CD8-positive, alpha-beta T cell (primary cell): ENCODE measurements at regions of chr14 and their contacts with region 1.

Region 1: GRCh38 chr14:24241829-24242443 is 487 bp downstream of the TINF2 start:
- DNase-seq: peak; percentile 84 to 97 (median 94)
- ATAC-seq: peak; percentile 83
- H3K4me3 ChIP-seq: peak overlapping the region; percentile 75 to 83
- H3K4me3 Mint-ChIP-seq: peak overlapping the region; percentile 99
- H3K27ac ChIP-seq: peak overlapping the region; percentile 98
- H3K27ac Mint-ChIP-seq: peak overlapping the region; percentile 100
- H3K4me1 ChIP-seq: peaks cover 41% of the 10 kb centered on the region
- H3K4me1 Mint-ChIP-seq: peaks cover 58% of the 10 kb centered on the region
- H3K27me3 ChIP-seq: no peaks in the 10 kb centered on the region
- H3K27me3 Mint-ChIP-seq: no peaks in the 10 kb centered on the region
- CTCF ChIP-seq: peak; percentile 48

Region 2: GRCh38 chr14:22689186-22689585 is 1552.8 kb before region 1 on chr14:
- CTCF ChIA-PET with region 1: no interaction called
- POLR2A ChIA-PET with region 1: no interaction called
- intact Hi-C with region 1: no loop called
- DNase-seq: no peak
- ATAC-seq: peak; percentile 54
- H3K4me3 ChIP-seq: no peak overlapping the region
- H3K4me3 Mint-ChIP-seq: no peak overlapping the region
- H3K27ac ChIP-seq: no peak overlapping the region
- H3K27ac Mint-ChIP-seq: no peak overlapping the region
- H3K4me1 ChIP-seq: no peaks in the 10 kb centered on the region
- H3K4me1 Mint-ChIP-seq: no peaks in the 10 kb centered on the region
- H3K27me3 ChIP-seq: peaks cover 2 to 7% of the 10 kb centered on the region in 2 experiments
- H3K27me3 Mint-ChIP-seq: peaks cover 17% of the 10 kb centered on the region
- CTCF ChIP-seq: no peak

Region 3: GRCh38 chr14:24013654-24014514 is 228.1 kb before region 1 on chr14:
- CTCF ChIA-PET with region 1: no interaction called
- POLR2A ChIA-PET with region 1: no interaction called
- intact Hi-C with region 1: loop called (anchors 1 kb)
- DNase-seq: peak in 8 of 9 experiments; percentile 14 to 84 (median 50)
- ATAC-seq: peak; percentile 99
- H3K4me3 ChIP-seq: no peak overlapping the region
- H3K4me3 Mint-ChIP-seq: no peak overlapping the region
- H3K27ac ChIP-seq: no peak overlapping the region
- H3K27ac Mint-ChIP-seq: no peak overlapping the region
- H3K4me1 ChIP-seq: peaks cover 7% of the 10 kb centered on the region
- H3K4me1 Mint-ChIP-seq: peaks cover 25% of the 10 kb centered on the region
- H3K27me3 ChIP-seq: no peaks in the 10 kb centered on the region
- H3K27me3 Mint-ChIP-seq: no peaks in the 10 kb centered on the region
- CTCF ChIP-seq: peak; percentile 93

Region 4: GRCh38 chr14:24188251-24189058 is 53.5 kb before region 1 on chr14 and contains the start of gene IPO4:
- CTCF ChIA-PET with region 1: interaction called, 8 read pairs
- POLR2A ChIA-PET with region 1: interaction called, 10 read pairs
- intact Hi-C with region 1: loop called in 1 of 2 experiments (anchors 1 kb)
- DNase-seq: peak; percentile 86 to 99 (median 94)
- ATAC-seq: peak; percentile 91
- H3K4me3 ChIP-seq: peak within 1 kb of the TSS; percentile 77 to 82
- H3K4me3 Mint-ChIP-seq: peak within 1 kb of the TSS; percentile 89
- H3K27ac ChIP-seq: peak within 1 kb of the TSS; percentile 61 to 89
- H3K27ac Mint-ChIP-seq: peak within 1 kb of the TSS; percentile 87
- H3K4me1 ChIP-seq: peaks cover 17% of the 10 kb centered on the region
- H3K4me1 Mint-ChIP-seq: peaks cover 38% of the 10 kb centered on the region
- H3K27me3 ChIP-seq: no peaks in the 10 kb centered on the region
- H3K27me3 Mint-ChIP-seq: no peaks in the 10 kb centered on the region
- CTCF ChIP-seq: no peak
- total RNA-seq, gene IPO4: 69.2 to 75.6 TPM

Region 5: DNA sequence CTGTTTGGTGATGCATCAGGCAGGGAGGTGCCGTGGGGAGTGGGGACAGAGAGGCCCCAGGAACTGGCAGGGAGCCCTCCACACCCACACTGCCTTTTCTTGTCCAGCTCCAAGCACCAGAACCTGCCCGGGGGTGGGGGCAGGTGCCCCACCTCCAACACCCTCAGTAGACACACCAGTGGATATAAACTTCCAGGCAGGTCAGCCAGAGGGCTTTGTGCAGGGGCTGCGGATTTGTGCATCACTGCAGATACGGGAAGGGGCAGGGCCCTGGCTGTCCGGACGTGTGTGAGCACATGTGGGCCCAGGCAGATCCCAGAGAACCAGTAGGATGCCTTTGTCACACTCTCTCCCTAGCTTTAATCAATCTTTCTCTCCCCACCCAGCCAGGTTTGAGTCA is 22.4 kb after region 1 on chr14:
- CTCF ChIA-PET with region 1: interaction called, 36 read pairs
- POLR2A ChIA-PET with region 1: interaction called, 53 read pairs
- intact Hi-C with region 1: no loop called
- DNase-seq: no peak
- ATAC-seq: no peak
- H3K4me3 ChIP-seq: no peak overlapping the region
- H3K4me3 Mint-ChIP-seq: no peak overlapping the region
- H3K27ac ChIP-seq: no peak overlapping the region
- H3K27ac Mint-ChIP-seq: no peak overlapping the region
- H3K4me1 ChIP-seq: no peaks in the 10 kb centered on the region
- H3K4me1 Mint-ChIP-seq: no peaks in the 10 kb centered on the region
- H3K27me3 ChIP-seq: no peaks in the 10 kb centered on the region
- H3K27me3 Mint-ChIP-seq: no peaks in the 10 kb centered on the region
- CTCF ChIP-seq: no peak

Region 6: DNA sequence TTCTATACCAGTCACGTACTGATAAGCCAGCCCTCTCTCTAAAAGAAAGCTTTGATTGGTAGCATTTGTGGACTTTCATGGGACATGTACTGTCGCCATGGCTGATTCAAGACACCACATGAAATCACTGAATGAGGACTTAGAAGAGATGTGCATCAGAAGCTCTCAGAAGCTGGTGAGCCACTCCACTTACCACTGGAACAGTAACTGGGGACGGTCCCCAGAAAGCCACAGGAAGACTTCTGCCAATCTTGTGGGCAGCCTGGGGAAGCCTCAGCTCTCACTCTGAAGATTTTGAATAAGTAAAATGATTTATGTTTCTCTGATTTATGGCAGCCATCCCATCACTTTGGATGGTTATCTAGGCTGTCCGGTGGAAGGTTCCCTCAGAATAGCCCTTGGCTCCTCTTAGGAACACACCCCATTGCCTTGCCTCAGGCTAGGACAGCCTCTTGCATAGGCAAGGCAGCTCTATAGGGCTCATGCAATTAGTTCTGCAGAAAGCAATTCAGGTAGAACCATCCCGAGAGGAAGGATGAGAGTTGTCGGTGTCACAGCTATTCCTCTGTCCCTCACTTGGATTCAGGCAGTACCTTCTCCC is 47.8 kb after region 1 on chr14:
- CTCF ChIA-PET with region 1: interaction called, 191 read pairs
- POLR2A ChIA-PET with region 1: interaction called, 4 read pairs
- intact Hi-C with region 1: no loop called
- DNase-seq: peak in 4 of 9 experiments; percentile 3 to 65 (median 20)
- ATAC-seq: peak; percentile 31
- H3K4me3 ChIP-seq: no peak overlapping the region
- H3K4me3 Mint-ChIP-seq: no peak overlapping the region
- H3K27ac ChIP-seq: no peak overlapping the region
- H3K27ac Mint-ChIP-seq: no peak overlapping the region
- H3K4me1 ChIP-seq: peaks cover 10% of the 10 kb centered on the region
- H3K4me1 Mint-ChIP-seq: peaks cover 2% of the 10 kb centered on the region
- H3K27me3 ChIP-seq: no peaks in the 10 kb centered on the region
- H3K27me3 Mint-ChIP-seq: no peaks in the 10 kb centered on the region
- CTCF ChIP-seq: no peak

Region 7: DNA sequence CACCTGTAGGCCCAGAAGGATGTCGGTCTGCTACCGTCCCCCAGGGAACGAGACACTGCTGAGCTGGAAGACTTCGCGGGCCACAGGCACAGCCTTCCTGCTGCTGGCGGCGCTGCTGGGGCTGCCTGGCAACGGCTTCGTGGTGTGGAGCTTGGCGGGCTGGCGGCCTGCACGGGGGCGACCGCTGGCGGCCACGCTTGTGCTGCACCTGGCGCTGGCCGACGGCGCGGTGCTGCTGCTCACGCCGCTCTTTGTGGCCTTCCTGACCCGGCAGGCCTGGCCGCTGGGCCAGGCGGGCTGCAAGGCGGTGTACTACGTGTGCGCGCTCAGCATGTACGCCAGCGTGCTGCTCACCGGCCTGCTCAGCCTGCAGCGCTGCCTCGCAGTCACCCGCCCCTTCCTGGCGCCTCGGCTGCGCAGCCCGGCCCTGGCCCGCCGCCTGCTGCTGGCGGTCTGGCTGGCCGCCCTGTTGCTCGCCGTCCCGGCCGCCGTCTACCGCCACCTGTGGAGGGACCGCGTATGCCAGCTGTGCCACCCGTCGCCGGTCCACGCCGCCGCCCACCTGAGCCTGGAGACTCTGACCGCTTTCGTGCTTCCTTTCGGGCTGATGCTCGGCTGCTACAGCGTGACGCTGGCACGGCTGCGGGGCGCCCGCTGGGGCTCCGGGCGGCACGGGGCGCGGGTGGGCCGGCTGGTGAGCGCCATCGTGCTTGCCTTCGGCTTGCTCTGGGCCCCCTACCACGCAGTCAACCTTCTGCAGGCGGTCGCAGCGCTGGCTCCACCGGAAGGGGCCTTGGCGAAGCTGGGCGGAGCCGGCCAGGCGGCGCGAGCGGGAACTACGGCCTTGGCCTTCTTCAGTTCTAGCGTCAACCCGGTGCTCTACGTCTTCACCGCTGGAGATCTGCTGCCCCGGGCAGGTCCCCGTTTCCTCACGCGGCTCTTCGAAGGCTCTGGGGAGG is 69.0 kb after region 1 on chr14 and contains the start of gene LTB4R:
- CTCF ChIA-PET with region 1: interaction called, 103 read pairs
- POLR2A ChIA-PET with region 1: interaction called, 23 read pairs
- intact Hi-C with region 1: loop called in 1 of 2 experiments (anchors 1 kb)
- DNase-seq: peak; percentile 41 to 89 (median 68)
- ATAC-seq: peak; percentile 80
- H3K4me3 ChIP-seq: peak within 1 kb of the TSS; percentile 52 to 57
- H3K4me3 Mint-ChIP-seq: peak within 1 kb of the TSS; percentile 75
- H3K27ac ChIP-seq: peak within 1 kb of the TSS; percentile 63 to 78
- H3K27ac Mint-ChIP-seq: peak within 1 kb of the TSS; percentile 90
- H3K4me1 ChIP-seq: peaks cover 62% of the 10 kb centered on the region
- H3K4me1 Mint-ChIP-seq: peaks cover 72% of the 10 kb centered on the region
- H3K27me3 ChIP-seq: no peaks in the 10 kb centered on the region
- H3K27me3 Mint-ChIP-seq: no peaks in the 10 kb centered on the region
- CTCF ChIP-seq: no peak
- total RNA-seq, gene LTB4R: 15.4 to 16.7 TPM

Region 8: DNA sequence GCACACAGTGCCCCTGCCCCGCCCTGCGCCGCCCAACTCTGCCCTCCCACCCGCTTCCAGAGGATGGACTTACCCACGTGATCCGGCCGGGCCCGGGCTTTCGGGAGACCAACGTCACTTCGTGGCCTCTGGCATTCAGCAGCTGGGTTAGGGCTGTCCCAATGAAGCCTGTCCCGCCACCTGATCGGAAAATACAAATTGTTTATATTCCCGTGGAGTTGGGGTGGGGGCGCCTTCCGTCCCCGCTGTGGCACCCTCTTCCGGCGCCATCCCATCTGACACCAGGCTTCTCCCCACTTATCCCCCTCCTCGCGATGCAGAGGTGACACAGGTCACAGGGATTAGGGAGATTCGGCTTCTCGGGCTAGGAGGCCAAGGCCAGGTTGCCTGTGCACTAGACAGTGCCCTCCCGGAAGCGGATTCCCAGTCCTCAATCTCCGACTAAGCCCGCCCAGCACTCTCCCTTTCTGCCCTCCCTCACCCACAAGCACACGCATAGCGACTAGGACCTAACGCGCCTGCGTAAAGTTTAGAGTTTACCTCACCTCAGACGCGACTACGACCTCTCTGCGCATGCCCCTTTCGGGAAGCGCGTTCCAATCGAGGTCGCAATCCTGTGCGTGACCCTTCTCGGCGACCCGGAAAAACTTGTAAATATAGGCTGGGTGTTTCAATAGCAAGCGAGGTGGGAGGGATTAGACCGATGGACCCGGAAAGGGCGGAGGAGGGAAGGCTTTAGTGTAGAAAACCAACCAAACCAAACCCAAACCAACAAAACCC is 200.5 kb after region 1 on chr14 and contains the start of gene SDR39U1:
- CTCF ChIA-PET with region 1: interaction called, 18 read pairs
- POLR2A ChIA-PET with region 1: interaction called, 9 read pairs
- intact Hi-C with region 1: loop called in 1 of 2 experiments (anchors 1 kb)
- DNase-seq: peak; percentile 93 to 100 (median 95)
- ATAC-seq: peak; percentile 89
- H3K4me3 ChIP-seq: peak within 1 kb of the TSS; percentile 77 to 89
- H3K4me3 Mint-ChIP-seq: peak within 1 kb of the TSS; percentile 95
- H3K27ac ChIP-seq: peak within 1 kb of the TSS; percentile 96
- H3K27ac Mint-ChIP-seq: peak within 1 kb of the TSS; percentile 97
- H3K4me1 ChIP-seq: peaks cover 35% of the 10 kb centered on the region
- H3K4me1 Mint-ChIP-seq: peaks cover 45% of the 10 kb centered on the region
- H3K27me3 ChIP-seq: no peaks in the 10 kb centered on the region
- H3K27me3 Mint-ChIP-seq: no peaks in the 10 kb centered on the region
- CTCF ChIP-seq: no peak
- total RNA-seq, gene SDR39U1: 75.0 to 84.4 TPM